CD4-positive, alpha-beta memory T cell (primary cell): ENCODE measurements at regions of chr9 and their contacts with region 1.

Region 1: DNA sequence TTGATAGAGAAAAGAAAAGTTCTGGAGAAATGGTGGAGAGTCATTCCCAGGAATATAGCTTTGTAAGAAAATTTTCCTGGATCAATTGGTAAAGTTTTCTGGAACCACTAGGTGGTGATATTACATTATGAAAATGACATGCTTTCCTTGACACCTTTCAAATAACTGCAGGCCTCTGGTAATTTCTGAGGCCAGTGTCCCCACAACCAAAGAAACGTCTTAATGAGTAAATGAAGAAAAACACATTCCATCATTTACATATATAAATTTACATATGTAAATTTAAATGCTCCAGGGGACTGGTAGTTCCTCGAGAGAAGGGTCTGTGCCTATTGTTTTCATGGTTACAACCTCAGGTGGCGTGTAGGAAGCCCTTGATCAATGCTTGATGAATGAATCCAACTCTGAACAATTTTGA is 17.2 kb upstream of the RGS3 start:
- DNase-seq: peak in 4 of 5 donors; percentile 38 to 53 (median 43)
- H3K4me3 ChIP-seq: no peak overlapping the region
- H3K4me3 Mint-ChIP-seq: no peak overlapping the region
- H3K27ac ChIP-seq: no peak overlapping the region
- H3K27ac Mint-ChIP-seq: no peak overlapping the region
- H3K4me1 ChIP-seq: no peaks in the 10 kb centered on the region
- H3K4me1 Mint-ChIP-seq: peaks cover 0 to 1% (median 0%) of the 10 kb centered on the region in 4 donors
- H3K27me3 ChIP-seq: no peaks in the 10 kb centered on the region
- H3K27me3 Mint-ChIP-seq: no peaks in the 10 kb centered on the region

Region 2: DNA sequence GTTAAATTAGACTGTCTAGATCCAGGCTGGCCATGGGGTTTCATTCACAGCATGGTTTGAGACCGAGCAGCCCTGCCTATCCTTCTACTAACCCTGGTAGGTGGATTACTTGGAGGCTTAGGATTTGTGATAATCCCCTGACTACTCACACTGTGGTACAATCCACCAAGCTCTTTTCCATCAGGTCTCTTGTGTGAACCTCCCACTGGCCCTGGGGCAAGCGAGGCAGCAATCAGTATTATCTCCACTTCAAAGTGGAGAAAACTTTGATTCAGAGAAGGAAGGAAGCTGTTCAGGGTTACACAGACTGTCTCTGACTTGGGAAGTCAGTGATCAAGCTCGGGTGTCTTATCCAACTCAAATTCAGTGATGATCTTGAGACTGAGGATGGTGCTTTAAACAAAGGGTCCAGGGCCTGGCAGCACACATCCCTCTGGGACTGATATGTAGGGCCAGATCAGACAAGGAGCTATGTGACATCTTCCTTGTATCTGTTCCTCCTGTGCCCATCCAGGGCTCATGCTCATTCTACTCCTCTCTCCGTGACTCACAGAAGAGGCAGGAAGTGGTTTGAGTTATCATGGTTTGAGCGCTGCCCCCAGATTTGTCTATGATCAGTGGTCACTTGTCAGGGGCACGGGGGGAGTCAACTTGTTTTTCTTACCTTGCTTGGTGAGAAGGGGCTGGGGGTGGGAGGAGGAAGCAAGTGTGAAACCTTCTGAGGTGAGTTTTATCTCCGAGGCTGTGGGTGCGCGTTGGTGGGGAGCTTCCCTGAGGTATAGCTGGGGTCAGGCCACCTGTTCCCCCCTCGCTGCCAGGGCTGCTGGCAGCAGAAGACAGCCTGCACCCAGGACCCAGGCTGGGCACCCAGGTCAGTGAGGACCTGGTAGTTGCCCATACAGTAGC is 65.8 kb after region 1 on chr9:
- CTCF ChIA-PET with region 1: interaction called, 16 read pairs
- POLR2A ChIA-PET with region 1: no interaction called
- intact Hi-C with region 1: no loop called
- DNase-seq: peak; percentile 57 to 90 (median 62)
- H3K4me3 ChIP-seq: peak overlapping the region in 1 of 2 donors; percentile 21
- H3K4me3 Mint-ChIP-seq: peak overlapping the region; percentile 73 to 91 (median 84)
- H3K27ac ChIP-seq: peak overlapping the region; percentile 57
- H3K27ac Mint-ChIP-seq: peak overlapping the region; percentile 89 to 96 (median 93)
- H3K4me1 ChIP-seq: peaks cover 60% of the 10 kb centered on the region
- H3K4me1 Mint-ChIP-seq: peaks cover 39 to 68% (median 54%) of the 10 kb centered on the region in 4 donors
- H3K27me3 ChIP-seq: no peaks in the 10 kb centered on the region
- H3K27me3 Mint-ChIP-seq: no peaks in the 10 kb centered on the region

Region 3: GRCh38 chr9:113591001-113591898 is 144.9 kb after region 1 on chr9:
- CTCF ChIA-PET with region 1: interaction called, 322 read pairs
- POLR2A ChIA-PET with region 1: interaction called, 6 read pairs
- intact Hi-C with region 1: loop called (anchors 2 kb)
- DNase-seq: peak in 4 of 5 donors; percentile 25 to 33 (median 28)
- H3K4me3 ChIP-seq: no peak overlapping the region
- H3K4me3 Mint-ChIP-seq: no peak overlapping the region
- H3K27ac ChIP-seq: no peak overlapping the region
- H3K27ac Mint-ChIP-seq: peak overlapping the region in 3 of 7 donors; percentile 41 to 74 (median 73)
- H3K4me1 ChIP-seq: peaks cover 17% of the 10 kb centered on the region
- H3K4me1 Mint-ChIP-seq: peaks cover 18 to 46% (median 25%) of the 10 kb centered on the region in 4 donors
- H3K27me3 ChIP-seq: no peaks in the 10 kb centered on the region
- H3K27me3 Mint-ChIP-seq: no peaks in the 10 kb centered on the region

Region 4: GRCh38 chr9:113648586-113649453 is 202.5 kb after region 1 on chr9:
- CTCF ChIA-PET with region 1: interaction called, 246 read pairs
- POLR2A ChIA-PET with region 1: interaction called, 3 read pairs
- intact Hi-C with region 1: no loop called
- DNase-seq: no peak
- H3K4me3 ChIP-seq: no peak overlapping the region
- H3K4me3 Mint-ChIP-seq: no peak overlapping the region
- H3K27ac ChIP-seq: no peak overlapping the region
- H3K27ac Mint-ChIP-seq: no peak overlapping the region
- H3K4me1 ChIP-seq: no peaks in the 10 kb centered on the region
- H3K4me1 Mint-ChIP-seq: no peaks in the 10 kb centered on the region
- H3K27me3 ChIP-seq: no peaks in the 10 kb centered on the region
- H3K27me3 Mint-ChIP-seq: peaks cover 2 to 8% of the 10 kb centered on the region in 2 donors

Region 5: GRCh38 chr9:113734826-113735225 is 288.5 kb after region 1 on chr9:
- CTCF ChIA-PET with region 1: no interaction called
- POLR2A ChIA-PET with region 1: no interaction called
- intact Hi-C with region 1: no loop called
- DNase-seq: no peak
- H3K4me3 ChIP-seq: no peak overlapping the region
- H3K4me3 Mint-ChIP-seq: no peak overlapping the region
- H3K27ac ChIP-seq: no peak overlapping the region
- H3K27ac Mint-ChIP-seq: no peak overlapping the region
- H3K4me1 ChIP-seq: no peaks in the 10 kb centered on the region
- H3K4me1 Mint-ChIP-seq: no peaks in the 10 kb centered on the region
- H3K27me3 ChIP-seq: no peaks in the 10 kb centered on the region
- H3K27me3 Mint-ChIP-seq: peaks cover 18 to 24% of the 10 kb centered on the region in 2 donors